CD4-positive, alpha-beta memory T cell (primary cell): ENCODE measurements at regions of chr10 and their contacts with region 1.

Region 1: GRCh38 chr10:110007701-110008517 is at the start of gene ADD3:
- DNase-seq: peak; percentile 89 to 93 (median 91)
- H3K4me3 ChIP-seq: peak within 1 kb of the TSS; percentile 61 to 88
- H3K4me3 Mint-ChIP-seq: peak within 1 kb of the TSS in 3 of 8 donors; percentile 98 to 100 (median 100)
- H3K27ac ChIP-seq: peak within 1 kb of the TSS; percentile 81
- H3K27ac Mint-ChIP-seq: peak within 1 kb of the TSS in 6 of 7 donors; percentile 88 to 99 (median 96)
- H3K4me1 ChIP-seq: peaks cover 42% of the 10 kb centered on the region
- H3K4me1 Mint-ChIP-seq: peaks cover 19 to 48% (median 39%) of the 10 kb centered on the region in 4 donors
- H3K27me3 ChIP-seq: no peaks in the 10 kb centered on the region
- H3K27me3 Mint-ChIP-seq: no peaks in the 10 kb centered on the region
- total RNA-seq, gene ADD3: 365 to 374 TPM

Region 2: DNA sequence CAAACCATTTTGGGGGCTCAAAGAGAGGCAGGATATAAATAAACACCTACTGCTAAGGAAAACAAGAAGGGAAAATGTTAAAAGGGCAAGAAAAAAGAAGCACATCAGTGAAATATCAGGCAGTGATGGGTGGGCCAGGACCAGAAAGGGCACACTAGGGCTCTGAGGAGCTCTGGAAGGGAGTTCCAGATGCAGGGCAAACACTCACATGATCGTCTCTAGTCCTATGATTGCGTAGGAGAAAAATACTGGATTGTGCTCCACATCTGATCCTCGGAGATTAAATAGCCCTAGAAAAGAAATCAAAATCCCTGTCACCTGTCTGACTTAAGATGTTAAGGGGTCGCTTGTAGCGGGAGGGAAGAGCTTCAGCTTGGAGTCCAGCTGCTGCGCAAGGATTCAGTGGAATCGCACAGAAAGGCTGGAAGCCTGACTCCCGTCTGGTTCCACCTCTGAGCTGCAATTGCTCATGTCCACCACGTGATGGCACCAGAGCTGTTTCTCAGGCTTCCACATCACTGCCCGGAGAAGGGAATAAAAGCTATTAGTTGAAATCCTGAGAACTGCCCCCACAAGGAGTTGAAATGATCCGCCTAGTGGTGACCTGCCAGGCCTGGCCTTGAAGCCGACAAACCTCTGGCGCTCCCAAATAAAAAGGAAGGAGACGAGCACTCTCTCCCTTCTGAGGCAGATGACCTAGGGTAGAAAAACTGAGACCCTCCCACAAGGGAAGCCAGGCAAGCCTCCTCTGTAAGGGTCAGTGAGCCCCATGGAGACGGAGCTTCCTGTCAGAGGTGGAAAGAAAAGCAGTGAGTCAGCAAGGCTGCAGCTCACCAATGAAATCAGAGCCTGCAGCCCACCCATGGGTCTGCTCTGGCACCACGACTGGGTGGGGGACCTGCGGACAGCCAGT is 123.8 kb before region 1 on chr10:
- CTCF ChIA-PET with region 1: interaction called, 7 read pairs
- POLR2A ChIA-PET with region 1: interaction called, 11 read pairs
- intact Hi-C with region 1: loop called (anchors 10 kb)
- DNase-seq: peak; percentile 56 to 66 (median 61)
- H3K4me3 ChIP-seq: no peak overlapping the region
- H3K4me3 Mint-ChIP-seq: no peak overlapping the region
- H3K27ac ChIP-seq: no peak overlapping the region
- H3K27ac Mint-ChIP-seq: peak overlapping the region in 4 of 7 donors; percentile 24 to 82 (median 62)
- H3K4me1 ChIP-seq: peaks cover 8% of the 10 kb centered on the region
- H3K4me1 Mint-ChIP-seq: peaks cover 4 to 24% (median 14%) of the 10 kb centered on the region in 4 donors
- H3K27me3 ChIP-seq: no peaks in the 10 kb centered on the region
- H3K27me3 Mint-ChIP-seq: no peaks in the 10 kb centered on the region

Region 3: GRCh38 chr10:109934958-109935706 is 72.8 kb before region 1 on chr10:
- CTCF ChIA-PET with region 1: interaction called, 4 read pairs
- POLR2A ChIA-PET with region 1: interaction called, 12 read pairs
- intact Hi-C with region 1: no loop called
- DNase-seq: peak; percentile 24 to 46 (median 44)
- H3K4me3 ChIP-seq: peak overlapping the region in 1 of 2 donors; percentile 26
- H3K4me3 Mint-ChIP-seq: peak overlapping the region; percentile 74 to 95 (median 88)
- H3K27ac ChIP-seq: peak overlapping the region; percentile 37
- H3K27ac Mint-ChIP-seq: peak overlapping the region; percentile 90 to 98 (median 97)
- H3K4me1 ChIP-seq: peaks cover 71% of the 10 kb centered on the region
- H3K4me1 Mint-ChIP-seq: peaks cover 47 to 80% (median 63%) of the 10 kb centered on the region in 4 donors
- H3K27me3 ChIP-seq: no peaks in the 10 kb centered on the region
- H3K27me3 Mint-ChIP-seq: no peaks in the 10 kb centered on the region

Region 4: GRCh38 chr10:110029450-110029849 is 21.5 kb after region 1 on chr10:
- CTCF ChIA-PET with region 1: interaction called, 3 read pairs
- POLR2A ChIA-PET with region 1: interaction called, 3 read pairs
- intact Hi-C with region 1: loop called (anchors 2 kb)
- DNase-seq: no peak
- H3K4me3 ChIP-seq: no peak overlapping the region
- H3K4me3 Mint-ChIP-seq: no peak overlapping the region
- H3K27ac ChIP-seq: no peak overlapping the region
- H3K27ac Mint-ChIP-seq: no peak overlapping the region
- H3K4me1 ChIP-seq: peaks cover 63% of the 10 kb centered on the region
- H3K4me1 Mint-ChIP-seq: peaks cover 44 to 70% (median 56%) of the 10 kb centered on the region in 4 donors
- H3K27me3 ChIP-seq: no peaks in the 10 kb centered on the region
- H3K27me3 Mint-ChIP-seq: no peaks in the 10 kb centered on the region

Region 5: GRCh38 chr10:110081911-110082310 is 74.0 kb after region 1 on chr10:
- CTCF ChIA-PET with region 1: interaction called, 10 read pairs
- POLR2A ChIA-PET with region 1: interaction called, 116 read pairs
- intact Hi-C with region 1: loop called (anchors 1 kb)
- DNase-seq: no peak
- H3K4me3 ChIP-seq: no peak overlapping the region
- H3K4me3 Mint-ChIP-seq: peak overlapping the region in 7 of 8 donors; percentile 40 to 83 (median 59)
- H3K27ac ChIP-seq: peak overlapping the region; percentile 41
- H3K27ac Mint-ChIP-seq: peak overlapping the region; percentile 86 to 94 (median 92)
- H3K4me1 ChIP-seq: peaks cover 99% of the 10 kb centered on the region
- H3K4me1 Mint-ChIP-seq: peaks cover 68 to 96% (median 82%) of the 10 kb centered on the region in 4 donors
- H3K27me3 ChIP-seq: no peaks in the 10 kb centered on the region
- H3K27me3 Mint-ChIP-seq: no peaks in the 10 kb centered on the region

Region 6: GRCh38 chr10:110304780-110305421 is 297.0 kb after region 1 on chr10 and contains the start of gene SMNDC1:
- CTCF ChIA-PET with region 1: no interaction called
- POLR2A ChIA-PET with region 1: interaction called, 3 read pairs
- intact Hi-C with region 1: loop called (anchors 10 kb)
- DNase-seq: peak; percentile 96 to 97 (median 96)
- H3K4me3 ChIP-seq: peak within 1 kb of the TSS; percentile 62 to 70
- H3K4me3 Mint-ChIP-seq: peak within 1 kb of the TSS; percentile 96 to 98 (median 98)
- H3K27ac ChIP-seq: peak within 1 kb of the TSS; percentile 81
- H3K27ac Mint-ChIP-seq: peak within 1 kb of the TSS; percentile 95 to 100 (median 99)
- H3K4me1 ChIP-seq: peaks cover 52% of the 10 kb centered on the region
- H3K4me1 Mint-ChIP-seq: peaks cover 27 to 58% (median 45%) of the 10 kb centered on the region in 4 donors
- H3K27me3 ChIP-seq: no peaks in the 10 kb centered on the region
- H3K27me3 Mint-ChIP-seq: no peaks in the 10 kb centered on the region
- total RNA-seq, gene SMNDC1: 39.0 to 39.3 TPM

Region 7: DNA sequence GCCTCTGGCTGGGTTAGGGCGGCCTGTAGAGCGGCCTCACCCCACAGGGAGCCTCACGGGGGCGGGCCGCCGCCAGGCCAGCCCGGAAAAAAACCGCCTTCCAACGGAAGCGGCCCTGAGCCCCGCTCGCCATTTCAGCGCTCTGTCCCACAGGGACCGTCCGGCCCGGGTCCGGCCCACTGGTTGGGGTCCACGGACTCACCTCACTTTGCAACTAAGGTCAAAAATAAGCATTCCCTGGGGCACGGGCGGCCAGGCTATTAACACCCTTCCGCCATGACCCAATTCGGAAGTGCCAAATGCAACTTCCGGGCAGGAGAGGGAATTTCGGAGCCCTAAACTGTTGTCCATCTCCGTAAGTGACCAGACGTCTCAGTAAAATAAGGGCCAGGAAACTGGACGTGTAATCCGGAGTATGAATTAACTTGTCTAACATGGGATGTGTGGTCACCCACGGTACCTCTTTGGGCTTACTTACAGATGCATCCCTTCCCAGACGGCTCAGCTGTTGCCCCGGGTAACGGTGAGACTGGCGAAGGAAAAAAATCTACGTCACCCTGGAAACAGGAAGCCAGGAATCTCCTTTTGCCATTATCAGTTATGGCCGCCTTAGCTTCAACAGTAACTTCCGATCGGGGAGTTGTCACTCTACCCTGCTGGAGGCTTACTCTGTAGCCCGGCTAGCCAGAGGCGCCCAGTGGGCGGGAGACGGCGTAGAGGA is 910.9 kb after region 1 on chr10 and contains the start of gene BBIP1:
- CTCF ChIA-PET with region 1: no interaction called
- POLR2A ChIA-PET with region 1: interaction called, 3 read pairs
- intact Hi-C with region 1: loop called (anchors 5 kb)
- DNase-seq: peak in 1 of 5 donors; percentile 96
- H3K4me3 ChIP-seq: peak within 1 kb of the TSS; percentile 85 to 99
- H3K4me3 Mint-ChIP-seq: peak within 1 kb of the TSS; percentile 92 to 99 (median 98)
- H3K27ac ChIP-seq: peak within 1 kb of the TSS; percentile 99
- H3K27ac Mint-ChIP-seq: peak within 1 kb of the TSS; percentile 98 to 100 (median 100)
- H3K4me1 ChIP-seq: peaks cover 43% of the 10 kb centered on the region
- H3K4me1 Mint-ChIP-seq: peaks cover 27 to 64% (median 35%) of the 10 kb centered on the region in 4 donors
- H3K27me3 ChIP-seq: no peaks in the 10 kb centered on the region
- H3K27me3 Mint-ChIP-seq: no peaks in the 10 kb centered on the region
- total RNA-seq, gene BBIP1: 42.9 to 46.8 TPM